CD8-positive, alpha-beta T cell (primary cell): ENCODE measurements at regions of chr17 and their contacts with region 1.

Region 1: GRCh38 chr17:78781948-78782916 is at the start of gene CYTH1:
- DNase-seq: peak; percentile 93 to 100 (median 98)
- ATAC-seq: peak; percentile 80
- H3K4me3 ChIP-seq: peak within 1 kb of the TSS; percentile 90 to 97
- H3K4me3 Mint-ChIP-seq: peak within 1 kb of the TSS; percentile 93
- H3K27ac ChIP-seq: peak within 1 kb of the TSS; percentile 86 to 93
- H3K27ac Mint-ChIP-seq: peak within 1 kb of the TSS; percentile 90
- H3K4me1 ChIP-seq: peaks cover 67% of the 10 kb centered on the region
- H3K4me1 Mint-ChIP-seq: peaks cover 55% of the 10 kb centered on the region
- H3K27me3 ChIP-seq: no peaks in the 10 kb centered on the region
- H3K27me3 Mint-ChIP-seq: no peaks in the 10 kb centered on the region
- CTCF ChIP-seq: no peak
- total RNA-seq, gene CYTH1: 475 to 490 TPM

Region 2: DNA sequence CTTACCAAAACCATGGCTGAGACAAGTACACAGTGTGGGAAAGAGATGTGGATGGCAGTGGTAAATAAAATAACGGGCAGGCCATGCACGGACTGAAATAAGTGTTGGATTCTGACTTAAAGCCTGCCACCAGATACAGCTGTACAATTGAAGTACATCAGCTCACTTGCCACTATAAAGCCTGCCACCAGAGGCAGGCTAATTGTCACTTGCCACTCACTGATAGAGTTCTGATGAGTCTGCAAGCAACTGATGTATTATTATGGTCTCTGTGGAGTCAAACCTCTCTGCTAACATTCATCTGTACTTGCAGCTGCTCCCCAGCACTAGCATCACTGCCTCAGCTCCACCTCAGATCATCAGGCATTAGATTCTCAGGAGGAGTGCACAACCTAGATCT is 93.2 kb before region 1 on chr17:
- CTCF ChIA-PET with region 1: no interaction called
- POLR2A ChIA-PET with region 1: no interaction called
- intact Hi-C with region 1: no loop called
- DNase-seq: no peak
- ATAC-seq: peak; percentile 61
- H3K4me3 ChIP-seq: no peak overlapping the region
- H3K4me3 Mint-ChIP-seq: no peak overlapping the region
- H3K27ac ChIP-seq: no peak overlapping the region
- H3K27ac Mint-ChIP-seq: peak overlapping the region; percentile 30
- H3K4me1 ChIP-seq: no peaks in the 10 kb centered on the region
- H3K4me1 Mint-ChIP-seq: peaks cover 4% of the 10 kb centered on the region
- H3K27me3 ChIP-seq: no peaks in the 10 kb centered on the region
- H3K27me3 Mint-ChIP-seq: no peaks in the 10 kb centered on the region
- CTCF ChIP-seq: no peak

Region 3: GRCh38 chr17:78759203-78759968 is 22.8 kb before region 1 on chr17:
- CTCF ChIA-PET with region 1: interaction called, 3 read pairs
- POLR2A ChIA-PET with region 1: interaction called, 6 read pairs
- intact Hi-C with region 1: loop called in 1 of 2 experiments (anchors 1 kb)
- DNase-seq: peak; percentile 68 to 94 (median 87)
- ATAC-seq: peak; percentile 78
- H3K4me3 ChIP-seq: peak overlapping the region; percentile 19 to 21
- H3K4me3 Mint-ChIP-seq: peak overlapping the region; percentile 66
- H3K27ac ChIP-seq: peak overlapping the region; percentile 85 to 93
- H3K27ac Mint-ChIP-seq: peak overlapping the region; percentile 86
- H3K4me1 ChIP-seq: peaks cover 84% of the 10 kb centered on the region
- H3K4me1 Mint-ChIP-seq: peaks cover 77% of the 10 kb centered on the region
- H3K27me3 ChIP-seq: no peaks in the 10 kb centered on the region
- H3K27me3 Mint-ChIP-seq: no peaks in the 10 kb centered on the region
- CTCF ChIP-seq: no peak

Region 4: GRCh38 chr17:78806451-78806850 is 24.2 kb after region 1 on chr17:
- CTCF ChIA-PET with region 1: interaction called, 61 read pairs
- POLR2A ChIA-PET with region 1: interaction called, 10 read pairs
- intact Hi-C with region 1: no loop called
- DNase-seq: peak in 6 of 9 experiments; percentile 39 to 85 (median 76)
- ATAC-seq: peak; percentile 69
- H3K4me3 ChIP-seq: no peak overlapping the region
- H3K4me3 Mint-ChIP-seq: peak overlapping the region; percentile 57
- H3K27ac ChIP-seq: peak overlapping the region in 1 of 2 experiments; percentile 30
- H3K27ac Mint-ChIP-seq: peak overlapping the region; percentile 85
- H3K4me1 ChIP-seq: peaks cover 34% of the 10 kb centered on the region
- H3K4me1 Mint-ChIP-seq: peaks cover 55% of the 10 kb centered on the region
- H3K27me3 ChIP-seq: no peaks in the 10 kb centered on the region
- H3K27me3 Mint-ChIP-seq: no peaks in the 10 kb centered on the region
- CTCF ChIP-seq: peak; percentile 58

Region 5: GRCh38 chr17:78818932-78819331 is 36.7 kb after region 1 on chr17:
- CTCF ChIA-PET with region 1: interaction called, 4 read pairs
- POLR2A ChIA-PET with region 1: interaction called, 4 read pairs
- intact Hi-C with region 1: loop called in 1 of 2 experiments (anchors 1 kb)
- DNase-seq: peak; percentile 35 to 90 (median 64)
- ATAC-seq: peak; percentile 47
- H3K4me3 ChIP-seq: peak overlapping the region in 1 of 2 experiments; percentile 21
- H3K4me3 Mint-ChIP-seq: peak overlapping the region; percentile 58
- H3K27ac ChIP-seq: peak overlapping the region; percentile 61 to 78
- H3K27ac Mint-ChIP-seq: peak overlapping the region; percentile 90
- H3K4me1 ChIP-seq: peaks cover 43% of the 10 kb centered on the region
- H3K4me1 Mint-ChIP-seq: peaks cover 68% of the 10 kb centered on the region
- H3K27me3 ChIP-seq: no peaks in the 10 kb centered on the region
- H3K27me3 Mint-ChIP-seq: no peaks in the 10 kb centered on the region
- CTCF ChIP-seq: no peak